Esophagus muscularis mucosa (tissue), 4 donors: ENCODE measurements at regions of chr10 and their contacts with region 1.

Region 1: DNA sequence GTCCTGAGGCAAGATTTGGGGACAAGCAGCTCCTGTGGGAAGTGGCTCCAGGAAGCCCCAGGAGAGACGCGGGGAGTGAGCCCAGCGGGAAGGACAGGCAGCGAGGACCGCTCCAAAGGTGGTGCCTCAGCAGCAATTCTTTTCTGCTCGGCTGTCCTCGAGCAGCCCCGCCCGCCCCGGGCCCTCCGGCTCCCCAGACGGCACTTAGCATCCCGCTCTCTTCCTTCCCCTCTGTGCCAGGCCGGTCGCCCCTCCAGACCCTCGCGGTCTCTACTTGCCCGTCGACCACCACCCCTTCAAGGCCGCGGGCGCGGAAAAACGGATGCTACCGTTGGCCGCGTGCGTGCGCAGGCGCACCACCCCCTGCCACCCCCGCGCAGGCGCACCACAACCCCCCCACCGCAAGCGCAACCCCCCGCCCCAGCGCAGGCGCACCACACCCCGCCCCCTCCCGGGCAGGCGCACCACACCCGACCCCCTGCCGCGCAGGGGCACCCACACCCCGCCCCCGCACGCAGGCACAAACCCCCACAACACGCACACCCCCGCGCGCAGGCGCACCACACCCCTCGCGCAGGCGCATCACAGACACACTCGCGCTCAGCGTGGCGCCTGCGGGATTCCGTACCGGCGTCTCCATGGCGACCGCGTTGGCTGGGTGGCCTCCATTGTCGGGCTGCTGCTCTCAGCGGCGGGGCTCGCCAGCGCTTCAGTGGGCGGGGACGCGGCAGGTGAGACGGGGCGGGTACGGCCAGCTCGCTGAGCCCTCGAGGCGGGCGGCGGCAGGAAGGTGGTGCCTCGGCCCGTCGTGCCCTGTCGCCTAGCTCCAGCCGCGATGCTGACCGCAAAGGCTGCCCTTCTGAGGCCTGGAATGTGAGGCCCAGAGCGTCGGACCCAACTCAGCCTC is at the start of gene LRRC27:
- DNase-seq: peak; percentile 99
- H3K4me3 ChIP-seq: peak within 1 kb of the TSS; percentile 66 to 85 (median 72)
- H3K27ac ChIP-seq: peak within 1 kb of the TSS; percentile 76 to 90 (median 80)
- H3K4me1 ChIP-seq: peaks cover 30 to 49% (median 40%) of the 10 kb centered on the region in 4 donors
- H3K27me3 ChIP-seq: no peaks in the 10 kb centered on the region
- CTCF ChIP-seq: peak in 1 of 3 experiments; percentile 15
- EP300 ChIP-seq: no peak
- POLR2A ChIP-seq: peak; percentile 11
- total RNA-seq, gene LRRC27: 5.8 to 19.1 (median 9.5) TPM

Region 2: GRCh38 chr10:132294561-132295318 is 37.0 kb before region 1 on chr10:
- intact Hi-C with region 1: no loop called
- DNase-seq: no peak
- H3K4me3 ChIP-seq: no peak overlapping the region
- H3K27ac ChIP-seq: no peak overlapping the region
- H3K4me1 ChIP-seq: peaks cover 0 to 17% (median 15%) of the 10 kb centered on the region in 4 donors
- H3K27me3 ChIP-seq: no peaks in the 10 kb centered on the region
- CTCF ChIP-seq: no peak
- EP300 ChIP-seq: no peak
- POLR2A ChIP-seq: no peak

Region 3: GRCh38 chr10:132307823-132308587 is 23.8 kb before region 1 on chr10 and contains the start of gene STK32C:
- intact Hi-C with region 1: loop called (anchors 2 kb)
- DNase-seq: peak; percentile 99
- H3K4me3 ChIP-seq: peak within 1 kb of the TSS; percentile 88 to 98 (median 94)
- H3K27ac ChIP-seq: peak within 1 kb of the TSS; percentile 79 to 92 (median 87)
- H3K4me1 ChIP-seq: peaks cover 12 to 27% (median 24%) of the 10 kb centered on the region in 4 donors
- H3K27me3 ChIP-seq: no peaks in the 10 kb centered on the region
- CTCF ChIP-seq: no peak
- EP300 ChIP-seq: no peak
- POLR2A ChIP-seq: no peak
- total RNA-seq, gene STK32C: 4.8 to 10.9 (median 7.8) TPM